Activated CD8-positive, alpha-beta memory T cell treated with anti-CD3 and anti-CD28 coated beads, Interleukin-2, amount 10 ng/mL, durations not matched to agents 7 days and 5 days (primary cell): ENCODE measurements at regions of chr16 and their contacts with region 1.

Region 1: DNA sequence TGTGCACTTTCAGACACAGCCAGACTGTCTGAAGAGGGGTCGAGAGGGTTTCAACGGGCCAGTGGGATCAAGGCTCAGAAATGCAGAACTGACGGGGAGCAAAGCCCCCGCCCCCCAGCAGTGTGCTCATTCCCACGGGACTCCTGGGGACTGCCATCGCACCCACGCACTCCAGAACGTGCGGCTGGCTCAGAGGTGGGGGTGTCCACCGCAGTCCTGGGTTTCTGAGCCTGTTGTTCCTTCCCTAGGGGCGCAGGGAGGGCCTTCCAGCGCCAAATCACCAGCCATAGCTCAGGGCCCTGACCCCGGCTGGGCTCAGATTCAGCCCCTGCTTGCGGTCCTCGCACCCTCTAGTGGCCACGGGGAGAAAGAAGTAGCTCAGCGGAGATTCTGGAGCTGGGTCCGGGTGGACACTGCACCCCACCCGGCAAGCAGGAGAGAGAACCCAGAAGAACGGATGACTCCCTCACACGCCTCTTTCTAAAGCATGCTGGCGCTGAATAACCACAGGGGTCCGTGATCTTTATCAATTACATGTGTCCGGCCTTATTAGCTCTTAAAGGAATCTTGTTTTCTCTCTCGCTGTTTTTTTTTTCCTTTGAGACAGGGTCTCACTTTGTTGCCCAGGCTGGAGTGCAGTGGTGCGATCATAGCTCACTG is 45.0 kb upstream of the USP7 start:
- DNase-seq: peak; percentile 78
- ATAC-seq: peak; percentile 98
- H3K4me3 Mint-ChIP-seq: no peak overlapping the region
- H3K27ac Mint-ChIP-seq: no peak overlapping the region
- H3K4me1 Mint-ChIP-seq: peaks cover 6% of the 10 kb centered on the region
- H3K27me3 Mint-ChIP-seq: peaks cover 18% of the 10 kb centered on the region

Region 2: DNA sequence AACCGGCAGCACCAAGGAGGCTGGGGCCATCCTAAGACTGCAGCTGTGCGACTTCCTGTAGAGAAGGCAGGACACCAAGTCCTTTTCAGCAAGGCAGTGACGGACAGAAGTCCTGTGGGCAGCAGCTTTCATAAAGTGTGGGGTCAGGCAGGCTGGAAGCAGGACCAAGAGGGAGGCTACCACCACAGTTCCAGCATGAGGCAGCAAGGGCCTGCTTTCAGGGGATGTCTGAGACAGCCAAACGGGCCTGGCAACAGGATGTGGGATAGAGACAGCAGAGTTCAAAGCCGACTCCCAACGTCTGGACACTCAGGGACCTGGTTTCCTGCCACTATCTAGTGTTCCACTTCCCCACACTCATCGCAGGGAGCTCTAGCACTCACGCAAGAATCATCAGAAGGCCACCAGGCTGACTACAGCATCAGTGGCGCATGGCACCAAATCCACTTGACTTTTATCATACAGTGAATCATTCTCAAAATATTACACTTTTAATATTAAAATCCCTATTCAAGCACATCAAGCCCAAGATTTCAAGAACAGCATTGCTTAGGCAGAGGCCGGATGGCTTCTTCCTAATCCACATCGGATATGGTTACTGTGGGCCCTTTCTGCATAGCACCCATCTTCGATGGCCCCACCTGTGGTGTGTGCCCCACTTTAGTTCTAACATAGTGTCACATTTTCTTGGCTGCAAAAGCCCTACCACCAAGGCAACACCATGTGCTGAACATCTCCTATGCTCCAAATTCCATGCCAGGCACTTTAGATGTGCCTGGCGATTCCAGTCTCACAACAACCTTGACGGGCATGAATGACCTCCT is 50.2 kb before region 1 on chr16:
- CTCF ChIA-PET with region 1: interaction called, 10 read pairs
- DNase-seq: peak; percentile 75
- ATAC-seq: peak; percentile 43
- H3K4me3 Mint-ChIP-seq: peak overlapping the region; percentile 85
- H3K27ac Mint-ChIP-seq: peak overlapping the region; percentile 92
- H3K4me1 Mint-ChIP-seq: peaks cover 76% of the 10 kb centered on the region
- H3K27me3 Mint-ChIP-seq: no peaks in the 10 kb centered on the region

Region 3: DNA sequence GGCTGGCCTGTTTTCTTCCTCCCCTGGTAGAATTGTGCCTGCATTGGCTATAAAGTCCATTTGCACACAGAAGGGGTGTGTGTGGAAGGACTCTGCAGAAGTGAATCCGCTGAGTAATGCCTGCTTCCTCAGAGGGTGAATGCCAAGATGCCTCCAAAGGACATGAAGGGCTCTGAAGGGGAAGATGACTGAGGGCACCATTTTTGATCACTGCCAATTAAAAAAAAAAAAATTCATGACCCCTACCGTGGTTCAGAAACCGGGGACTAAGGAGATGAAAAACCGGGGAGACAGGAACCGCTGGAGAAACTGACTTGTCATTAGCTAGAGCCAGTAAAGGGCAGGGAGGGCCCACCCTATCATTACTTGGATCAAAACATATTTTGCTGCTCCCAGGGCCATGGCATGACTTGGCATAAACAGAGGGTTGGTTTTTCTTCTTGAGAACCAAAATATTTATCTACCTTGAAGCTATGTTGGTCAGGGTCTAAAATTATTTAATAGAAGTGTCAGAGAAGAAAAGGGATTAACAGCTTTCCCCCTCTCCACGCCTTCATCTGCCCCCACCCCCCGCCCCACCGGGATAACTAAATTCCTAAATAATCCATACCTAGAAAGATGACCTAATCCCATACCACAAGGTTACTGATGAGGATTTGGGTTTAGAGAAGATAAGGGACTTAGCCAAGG is 41.5 kb before region 1 on chr16:
- CTCF ChIA-PET with region 1: interaction called, 10 read pairs
- DNase-seq: no peak
- ATAC-seq: no peak
- H3K4me3 Mint-ChIP-seq: no peak overlapping the region
- H3K27ac Mint-ChIP-seq: no peak overlapping the region
- H3K4me1 Mint-ChIP-seq: peaks cover 4% of the 10 kb centered on the region
- H3K27me3 Mint-ChIP-seq: peaks cover 13% of the 10 kb centered on the region

Region 4: GRCh38 chr16:9047686-9048301 is 39.1 kb after region 1 on chr16:
- CTCF ChIA-PET with region 1: interaction called, 12 read pairs
- DNase-seq: peak; percentile 76
- ATAC-seq: peak; percentile 87
- H3K4me3 Mint-ChIP-seq: no peak overlapping the region
- H3K27ac Mint-ChIP-seq: peak overlapping the region; percentile 1
- H3K4me1 Mint-ChIP-seq: peaks cover 29% of the 10 kb centered on the region
- H3K27me3 Mint-ChIP-seq: no peaks in the 10 kb centered on the region

Region 5: GRCh38 chr16:9134739-9135138 is 126.0 kb after region 1 on chr16:
- CTCF ChIA-PET with region 1: interaction called, 18 read pairs
- DNase-seq: peak; percentile 77
- ATAC-seq: peak; percentile 80
- H3K4me3 Mint-ChIP-seq: no peak overlapping the region
- H3K27ac Mint-ChIP-seq: peak overlapping the region; percentile 37
- H3K4me1 Mint-ChIP-seq: peaks cover 25% of the 10 kb centered on the region
- H3K27me3 Mint-ChIP-seq: peaks cover 2% of the 10 kb centered on the region